ENCODE measurements at regions of chr2 and their contacts with region 1.

Region 1: DNA sequence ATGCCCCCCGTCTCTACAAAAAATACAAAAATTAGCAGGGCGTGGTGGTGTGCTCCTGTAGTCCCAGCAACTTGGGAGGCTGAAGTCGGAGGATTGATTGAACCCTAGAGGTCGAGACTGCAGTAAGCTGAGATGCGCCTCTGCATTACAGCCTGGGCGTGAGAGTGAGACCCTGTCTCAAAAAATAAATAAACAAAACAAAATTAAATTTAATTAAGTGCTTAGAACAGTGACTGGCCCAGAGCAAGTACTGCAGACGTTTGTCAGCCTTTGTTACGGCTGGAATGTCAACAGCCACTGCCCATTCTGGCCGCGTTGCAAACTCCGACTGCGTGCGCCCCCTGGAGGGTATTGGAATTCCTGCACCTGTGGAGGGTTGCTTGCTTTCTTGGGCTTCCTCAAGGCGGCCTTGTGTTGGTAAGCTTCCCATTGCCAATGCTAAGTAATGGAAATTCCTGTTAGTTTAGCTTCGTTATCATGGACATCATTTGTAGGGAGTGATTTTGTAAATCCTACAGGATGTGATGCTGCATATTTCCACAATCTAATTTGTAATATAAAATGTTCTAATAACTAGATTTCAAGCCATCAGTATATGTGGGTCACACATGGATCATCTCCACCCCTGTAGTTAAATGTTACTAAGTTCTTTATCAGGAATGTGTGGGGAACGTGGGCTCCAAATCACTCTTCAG is 15.9 kb upstream of the ATP6V1B1 start:
- DNase-seq: peak; percentile 73 to 83 (median 74)
- H3K4me3 ChIP-seq: no peak overlapping the region
- H3K27ac ChIP-seq: no peak overlapping the region
- H3K4me1 ChIP-seq: no peaks in the 10 kb centered on the region
- H3K27me3 ChIP-seq: peaks cover 0 to 24% (median 10%) of the 10 kb centered on the region in 5 experiments

Region 2: DNA sequence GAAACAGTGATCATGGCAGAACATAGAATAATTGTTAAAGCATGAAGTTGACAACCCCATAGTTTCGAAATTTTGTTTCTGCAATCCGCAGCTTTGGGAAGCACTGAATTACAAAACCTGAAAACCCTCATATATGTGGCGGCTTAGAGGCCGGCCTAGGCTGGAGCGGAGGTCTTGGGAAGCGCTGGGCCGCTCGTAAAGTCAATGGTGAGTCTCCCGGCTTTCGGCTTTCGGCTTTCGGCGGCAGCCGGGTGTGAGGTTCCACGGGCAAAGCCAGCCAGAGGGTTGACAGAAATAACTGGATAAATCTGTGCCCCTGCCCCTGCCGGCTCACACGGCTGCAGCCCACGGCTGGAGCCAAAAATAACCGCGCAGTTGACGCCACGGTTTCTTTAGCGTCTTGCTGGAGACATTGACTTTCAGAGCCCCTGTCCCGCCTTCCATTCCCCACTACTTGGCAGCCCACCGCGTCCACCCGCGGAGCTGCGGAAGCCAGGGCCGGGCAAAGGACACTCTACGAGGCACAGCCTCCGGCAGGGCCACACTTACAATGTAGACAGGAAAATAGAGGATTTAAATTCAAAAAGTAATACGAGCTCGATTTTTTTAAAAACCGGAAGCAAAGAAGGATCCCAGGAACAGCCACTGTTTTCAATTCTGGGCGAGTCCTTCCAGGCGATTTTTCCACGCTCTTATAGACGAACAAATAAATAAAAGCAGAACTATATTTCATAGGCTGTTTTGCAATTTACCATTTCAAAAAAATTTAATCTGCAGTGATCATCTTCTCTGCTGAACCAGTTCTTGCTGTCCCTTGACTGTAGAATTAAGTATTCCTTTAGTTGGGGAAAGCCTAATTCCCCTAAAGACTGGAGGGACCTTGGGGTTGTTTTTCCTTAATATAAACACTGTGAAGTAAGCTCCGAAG is 12.4 kb before region 1 on chr2:
- CTCF ChIA-PET with region 1: interaction called, 21 read pairs
- POLR2A ChIA-PET with region 1: no interaction called
- DNase-seq: no peak
- H3K4me3 ChIP-seq: peak overlapping the region in 2 of 7 experiments; percentile 6 to 24
- H3K27ac ChIP-seq: no peak overlapping the region
- H3K4me1 ChIP-seq: peaks cover 0 to 13% (median 4%) of the 10 kb centered on the region in 4 experiments
- H3K27me3 ChIP-seq: peaks cover 36 to 97% (median 67%) of the 10 kb centered on the region in 5 experiments

Region 3: DNA sequence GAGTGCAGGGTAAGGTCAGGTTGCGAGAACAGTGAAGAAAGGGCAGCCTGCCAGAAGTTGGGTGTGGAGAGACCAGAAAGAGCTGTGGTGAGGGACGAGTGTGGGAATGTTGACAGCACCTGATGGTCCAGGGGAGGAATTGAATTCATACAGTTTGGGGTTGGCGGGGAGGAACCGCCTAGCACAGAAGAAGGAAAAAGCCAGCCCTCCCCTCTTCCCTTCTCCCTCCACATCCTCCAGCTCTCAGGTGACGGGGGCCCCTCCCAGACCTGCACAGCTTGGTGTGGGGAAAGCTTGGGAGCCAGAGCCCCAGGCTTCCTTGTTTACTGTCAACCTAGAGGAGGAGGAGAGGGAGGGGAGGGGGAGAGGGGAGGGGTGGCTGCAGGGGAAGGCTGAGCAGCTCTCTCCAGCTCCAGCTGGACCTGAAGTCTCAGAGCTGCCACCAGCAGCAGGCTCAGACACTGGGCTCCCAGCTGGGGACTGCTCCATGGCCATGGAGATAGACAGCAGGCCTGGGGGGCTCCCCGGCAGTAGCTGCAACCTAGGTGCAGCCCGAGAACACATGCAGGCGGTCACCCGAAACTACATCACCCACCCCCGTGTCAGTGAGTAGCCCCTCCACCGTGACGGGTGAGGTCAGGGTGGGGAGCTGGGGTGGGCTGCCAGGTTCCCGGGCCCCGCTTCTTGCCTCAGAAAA is 15.8 kb after region 1 on chr2 and contains the start of gene ATP6V1B1:
- CTCF ChIA-PET with region 1: interaction called, 11 read pairs
- POLR2A ChIA-PET with region 1: no interaction called
- DNase-seq: no peak
- H3K4me3 ChIP-seq: no peak within 1 kb of the TSS
- H3K27ac ChIP-seq: no peak within 1 kb of the TSS
- H3K4me1 ChIP-seq: peaks cover 0 to 2% (median 0%) of the 10 kb centered on the region in 4 experiments
- H3K27me3 ChIP-seq: peaks cover 0 to 33% (median 17%) of the 10 kb centered on the region in 5 experiments

Region 4: GRCh38 chr2:70942396-70943204 is 22.8 kb after region 1 on chr2:
- CTCF ChIA-PET with region 1: interaction called, 28 read pairs
- POLR2A ChIA-PET with region 1: no interaction called
- DNase-seq: no peak
- H3K4me3 ChIP-seq: no peak overlapping the region
- H3K27ac ChIP-seq: no peak overlapping the region
- H3K4me1 ChIP-seq: peaks cover 0 to 8% (median 3%) of the 10 kb centered on the region in 4 experiments
- H3K27me3 ChIP-seq: peaks cover 2 to 38% (median 16%) of the 10 kb centered on the region in 5 experiments

Region 5: DNA sequence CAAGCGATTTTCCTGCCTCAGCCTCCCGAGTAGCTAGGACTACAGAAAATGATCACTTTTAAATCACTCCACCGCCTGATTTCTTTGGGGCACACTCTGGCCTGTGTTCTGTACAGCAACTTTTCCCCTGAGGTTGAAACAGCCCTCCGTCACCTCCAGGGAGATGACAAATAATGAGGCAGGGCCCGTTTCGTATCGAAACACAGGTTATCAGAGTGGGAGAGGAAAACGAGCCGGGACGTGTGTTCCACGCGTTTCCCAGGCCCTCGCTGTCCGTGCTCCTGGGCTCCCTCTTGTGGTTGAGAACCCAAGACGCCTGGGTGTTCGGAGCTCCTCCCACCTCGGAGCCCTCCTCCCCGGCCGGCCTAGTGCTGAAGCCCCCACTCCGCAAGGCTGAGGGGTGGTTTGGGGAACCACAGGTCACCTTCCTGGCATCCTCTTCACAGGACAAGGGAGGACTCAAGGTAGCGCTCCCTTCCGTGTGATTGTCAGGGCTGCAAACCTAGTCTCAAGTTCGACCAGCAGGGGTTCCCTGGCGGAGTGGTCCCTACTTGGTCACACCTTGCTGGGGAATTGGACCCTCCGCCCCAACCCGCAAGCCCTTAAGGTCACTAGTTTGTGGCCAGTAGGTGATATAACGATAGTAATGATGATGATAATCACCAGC is 28.7 kb after region 1 on chr2:
- CTCF ChIA-PET with region 1: interaction called, 28 read pairs
- POLR2A ChIA-PET with region 1: no interaction called
- DNase-seq: peak; percentile 70 to 79 (median 74)
- H3K4me3 ChIP-seq: peak overlapping the region in 4 of 7 experiments; percentile 33 to 65 (median 40)
- H3K27ac ChIP-seq: no peak overlapping the region
- H3K4me1 ChIP-seq: peaks cover 0 to 18% (median 9%) of the 10 kb centered on the region in 4 experiments
- H3K27me3 ChIP-seq: peaks cover 3 to 16% (median 11%) of the 10 kb centered on the region in 5 experiments

Region 6: GRCh38 chr2:71122387-71123298 is 202.8 kb after region 1 on chr2:
- CTCF ChIA-PET with region 1: no interaction called
- POLR2A ChIA-PET with region 1: no interaction called
- DNase-seq: no peak
- H3K4me3 ChIP-seq: no peak overlapping the region
- H3K27ac ChIP-seq: no peak overlapping the region
- H3K4me1 ChIP-seq: no peaks in the 10 kb centered on the region
- H3K27me3 ChIP-seq: no peaks in the 10 kb centered on the region